ENCODE measurements at regions of chr11 and their contacts with region 1.

Region 1: DNA sequence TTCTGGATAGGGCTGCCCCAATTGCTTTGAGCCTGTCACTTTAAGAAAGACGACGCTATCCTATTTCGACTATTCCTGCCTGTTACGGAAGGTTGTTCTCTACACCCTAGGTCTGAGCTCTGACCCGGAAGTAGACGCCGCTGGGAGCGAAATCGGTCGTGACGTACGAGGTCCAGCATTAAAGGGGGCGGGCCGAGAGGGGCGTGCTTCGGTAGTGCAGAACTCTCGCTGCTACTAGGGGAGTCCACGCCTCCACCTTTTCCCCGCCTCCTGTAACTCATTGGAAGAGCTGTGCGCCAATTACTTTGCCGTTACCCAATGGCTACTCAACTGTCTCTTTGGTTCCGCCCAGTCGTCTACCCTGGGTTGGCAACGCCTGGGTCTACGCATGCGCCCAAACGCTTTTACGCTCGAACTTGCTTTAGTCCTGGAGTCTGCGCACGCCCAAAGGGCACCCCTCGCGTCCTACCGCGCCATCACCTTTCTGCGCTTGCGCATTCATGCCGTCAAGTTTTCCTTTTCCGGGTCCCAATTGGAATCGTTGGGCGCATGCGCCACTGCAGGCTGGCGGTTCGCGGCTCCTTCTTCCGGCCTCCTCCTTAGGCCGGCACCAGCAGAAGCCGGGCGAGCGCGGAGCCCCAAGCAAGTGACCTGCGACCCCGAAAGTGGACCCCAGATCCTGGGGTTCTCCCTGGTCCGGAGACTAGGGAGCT is at the start of gene PCNX3:
- DNase-seq: peak; percentile 100
- H3K4me3 Mint-ChIP-seq: peak within 1 kb of the TSS; percentile 97
- H3K27ac Mint-ChIP-seq: peak within 1 kb of the TSS; percentile 94
- H3K4me1 Mint-ChIP-seq: peaks cover 27% of the 10 kb centered on the region
- H3K27me3 Mint-ChIP-seq: no peaks in the 10 kb centered on the region
- total RNA-seq, gene PCNX3: 55.0 and 55.2 TPM in 2 replicates

Region 2: GRCh38 chr11:64723117-64723906 is 892.1 kb before region 1 on chr11 and contains the start of gene NRXN2:
- intact Hi-C with region 1: no loop called
- DNase-seq: peak; percentile 90
- H3K4me3 Mint-ChIP-seq: peak within 1 kb of the TSS; percentile 62
- H3K27ac Mint-ChIP-seq: peak within 1 kb of the TSS; percentile 52
- H3K4me1 Mint-ChIP-seq: peaks cover 13% of the 10 kb centered on the region
- H3K27me3 Mint-ChIP-seq: peaks cover 41% of the 10 kb centered on the region
- total RNA-seq, gene NRXN2: 0.17 and 0.23 TPM in 2 replicates

Region 3: DNA sequence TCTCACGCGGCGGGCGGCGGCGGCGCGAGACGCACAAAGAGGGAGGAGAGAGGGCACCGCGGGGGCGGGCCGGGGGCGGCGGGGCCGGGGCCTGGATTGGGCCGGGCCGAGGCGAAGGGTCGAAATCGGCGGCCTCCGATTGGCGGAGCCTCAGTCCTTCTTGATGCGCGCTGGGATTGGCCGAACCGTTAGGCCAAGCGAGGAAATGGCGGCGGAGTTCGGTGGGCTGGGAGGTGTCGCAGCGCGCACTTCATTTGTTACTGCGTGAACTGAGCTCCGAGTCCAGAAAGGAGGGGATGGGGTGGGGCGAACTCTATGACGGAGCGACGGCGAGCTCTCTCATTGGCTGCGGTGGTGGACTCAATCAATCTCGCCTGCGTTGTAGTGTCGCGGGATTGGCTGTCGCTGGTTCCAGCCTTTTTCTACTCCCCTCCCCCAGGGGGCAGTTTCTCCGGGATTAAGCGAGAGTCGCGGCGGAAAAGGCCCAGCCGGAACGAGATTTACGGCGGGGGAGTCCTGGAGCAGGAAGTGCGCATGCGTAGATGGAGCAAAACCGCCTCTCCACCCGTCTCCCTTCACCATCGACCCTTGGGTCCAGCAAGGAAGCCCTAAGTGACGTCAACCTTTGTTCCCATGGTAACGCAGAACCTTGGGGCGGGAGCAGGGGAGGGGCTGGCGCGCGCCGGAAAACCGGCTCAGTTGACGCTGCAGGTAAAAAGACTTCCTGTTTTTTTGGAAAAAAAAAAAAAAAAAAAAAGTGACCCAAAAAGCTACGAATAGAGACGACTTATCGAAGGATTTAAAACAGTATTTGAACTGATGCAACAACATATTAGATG is 836.7 kb before region 1 on chr11 and contains the start of gene SF1:
- intact Hi-C with region 1: loop called (anchors 2 kb)
- DNase-seq: peak; percentile 99
- H3K4me3 Mint-ChIP-seq: peak within 1 kb of the TSS; percentile 87
- H3K27ac Mint-ChIP-seq: peak within 1 kb of the TSS; percentile 97
- H3K4me1 Mint-ChIP-seq: peaks cover 57% of the 10 kb centered on the region
- H3K27me3 Mint-ChIP-seq: peaks cover 2% of the 10 kb centered on the region
- total RNA-seq, gene SF1: 518 and 538 TPM in 2 replicates

Region 4: GRCh38 chr11:65354265-65355012 is 260.9 kb before region 1 on chr11 and contains the start of gene TIGD3:
- intact Hi-C with region 1: loop called (anchors 1 kb)
- DNase-seq: peak; percentile 93
- H3K4me3 Mint-ChIP-seq: peak within 1 kb of the TSS; percentile 89
- H3K27ac Mint-ChIP-seq: peak within 1 kb of the TSS; percentile 81
- H3K4me1 Mint-ChIP-seq: peaks cover 8% of the 10 kb centered on the region
- H3K27me3 Mint-ChIP-seq: peaks cover 16% of the 10 kb centered on the region
- total RNA-seq, gene TIGD3: 1.1 TPM in 2 replicates

Region 5: DNA sequence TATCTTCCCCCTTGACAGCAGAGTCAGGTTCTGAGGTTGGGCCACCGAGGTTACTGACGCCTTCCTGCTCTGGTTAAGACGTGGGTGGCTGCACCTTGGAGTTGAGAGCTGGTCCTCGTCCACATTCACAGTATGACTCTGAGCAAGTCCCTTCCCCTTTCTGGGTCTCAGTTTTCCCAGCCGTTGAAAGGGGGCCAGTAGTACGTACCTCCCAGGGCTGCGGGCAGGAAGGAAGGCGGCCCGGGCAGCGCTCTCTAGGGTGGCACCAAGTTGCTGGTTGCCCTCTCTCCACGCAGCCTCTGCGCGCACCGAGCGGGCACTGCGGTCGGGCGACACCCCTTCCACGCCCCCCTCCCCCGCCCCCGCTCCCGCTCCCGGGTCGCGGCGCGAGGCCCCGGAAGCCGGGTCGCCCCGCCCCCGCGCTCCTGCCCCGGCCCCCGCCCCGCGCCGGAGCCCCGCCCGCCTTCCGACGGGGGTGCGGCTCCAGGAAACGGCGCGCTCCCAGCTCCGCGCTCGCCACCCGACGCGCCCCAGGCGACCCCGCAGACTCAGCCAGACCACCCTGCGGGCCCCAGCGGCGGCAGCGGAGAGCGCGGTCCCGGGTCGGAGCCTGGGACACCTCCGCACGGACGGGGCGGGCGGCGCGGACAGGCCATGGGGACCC is 39.7 kb before region 1 on chr11 and contains the start of gene EHBP1L1:
- intact Hi-C with region 1: loop called (anchors 1 kb)
- DNase-seq: peak; percentile 76
- H3K4me3 Mint-ChIP-seq: peak within 1 kb of the TSS; percentile 92
- H3K27ac Mint-ChIP-seq: peak within 1 kb of the TSS; percentile 88
- H3K4me1 Mint-ChIP-seq: peaks cover 48% of the 10 kb centered on the region
- H3K27me3 Mint-ChIP-seq: no peaks in the 10 kb centered on the region
- total RNA-seq, gene EHBP1L1: 168 and 178 TPM in 2 replicates

Region 6: DNA sequence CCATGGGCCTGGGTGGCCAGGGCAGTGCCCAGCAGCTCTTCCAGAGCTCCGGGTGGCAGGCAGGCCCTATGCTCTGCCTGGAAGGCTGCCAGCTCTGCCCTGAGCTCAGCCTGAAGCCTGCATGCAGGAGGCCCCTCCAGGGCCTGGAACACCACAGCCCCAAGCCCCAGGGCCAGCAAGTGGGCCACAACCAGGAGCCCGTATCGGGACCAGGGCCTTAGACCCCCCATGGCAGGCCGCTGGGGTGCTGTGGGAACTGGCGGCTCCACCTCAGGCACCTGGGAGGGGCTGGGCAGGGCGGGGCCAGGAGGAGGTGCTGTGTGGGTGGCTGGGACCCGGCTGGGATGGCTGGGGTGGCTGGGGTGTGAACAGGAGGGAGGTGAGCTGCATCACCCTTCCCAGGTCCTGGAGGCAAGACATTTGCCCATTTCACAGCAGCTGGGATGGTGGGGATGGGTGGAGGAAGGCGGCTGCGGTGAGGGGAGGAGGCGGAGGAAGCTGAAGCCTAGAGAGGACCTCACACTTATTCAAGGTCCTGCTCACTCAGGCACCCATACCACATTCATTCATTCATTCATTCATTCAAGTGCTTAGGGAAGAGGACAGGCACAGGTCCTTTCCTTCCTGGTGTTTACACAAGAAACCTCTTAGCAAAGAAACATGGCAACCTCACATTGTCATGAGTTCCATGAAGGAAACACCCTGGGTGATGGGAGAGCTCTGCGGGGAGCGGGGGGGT is 19.7 kb before region 1 on chr11 and contains the start of gene KCNK7:
- intact Hi-C with region 1: no loop called
- DNase-seq: no peak
- H3K4me3 Mint-ChIP-seq: peak within 1 kb of the TSS; percentile 35
- H3K27ac Mint-ChIP-seq: peak within 1 kb of the TSS; percentile 29
- H3K4me1 Mint-ChIP-seq: peaks cover 14% of the 10 kb centered on the region
- H3K27me3 Mint-ChIP-seq: no peaks in the 10 kb centered on the region
- total RNA-seq, gene KCNK7: 1.6 and 2.0 TPM in 2 replicates

Region 7: GRCh38 chr11:65652511-65653231 is 37.3 kb after region 1 on chr11:
- intact Hi-C with region 1: loop called (anchors 1 kb)
- DNase-seq: peak; percentile 95
- H3K4me3 Mint-ChIP-seq: peak overlapping the region; percentile 88
- H3K27ac Mint-ChIP-seq: peak overlapping the region; percentile 97
- H3K4me1 Mint-ChIP-seq: peaks cover 42% of the 10 kb centered on the region
- H3K27me3 Mint-ChIP-seq: peaks cover 3% of the 10 kb centered on the region

Region 8: GRCh38 chr11:65888163-65888814 is 272.9 kb after region 1 on chr11 and contains the start of gene FIBP:
- intact Hi-C with region 1: loop called (anchors 1 kb)
- DNase-seq: peak; percentile 90
- H3K4me3 Mint-ChIP-seq: peak within 1 kb of the TSS; percentile 99
- H3K27ac Mint-ChIP-seq: peak within 1 kb of the TSS; percentile 96
- H3K4me1 Mint-ChIP-seq: peaks cover 58% of the 10 kb centered on the region
- H3K27me3 Mint-ChIP-seq: no peaks in the 10 kb centered on the region
- total RNA-seq, gene FIBP: 86.8 and 93.2 TPM in 2 replicates

Region 9: DNA sequence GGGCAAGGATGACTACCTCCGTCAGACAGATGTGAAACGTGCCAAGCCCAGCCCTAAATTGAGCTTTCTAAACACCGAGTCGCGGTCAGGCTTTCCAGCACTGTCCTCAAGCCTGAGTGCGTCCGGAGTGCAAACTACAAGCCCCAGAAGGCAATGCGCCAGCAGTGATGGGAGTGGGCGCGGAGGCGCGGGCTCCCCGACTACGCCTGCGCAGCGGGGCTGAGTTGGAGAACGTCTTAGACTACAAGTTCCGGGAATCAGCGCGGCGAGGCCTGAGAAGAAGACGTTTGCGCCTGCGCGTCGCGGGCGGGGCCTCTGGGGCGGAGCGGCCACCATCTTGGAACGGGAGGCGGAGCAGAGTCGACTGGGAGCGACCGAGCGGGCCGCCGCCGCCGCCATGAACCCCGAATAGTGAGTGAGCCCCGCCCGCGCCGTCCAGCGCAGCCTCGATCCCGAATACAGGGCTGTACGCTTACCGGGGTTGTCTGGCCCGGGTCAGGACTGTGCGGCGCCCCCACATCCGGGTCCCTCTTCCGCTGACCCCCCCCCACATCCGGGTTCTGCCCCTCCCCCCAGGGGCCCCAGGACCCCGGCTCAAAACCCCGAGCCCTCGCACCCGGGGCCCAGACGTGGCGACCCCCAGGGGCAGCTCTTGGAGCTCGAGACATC is 653.0 kb after region 1 on chr11 and contains the start of gene RAB1B:
- intact Hi-C with region 1: loop called (anchors 1 kb)
- DNase-seq: peak; percentile 100
- H3K4me3 Mint-ChIP-seq: peak within 1 kb of the TSS; percentile 90
- H3K27ac Mint-ChIP-seq: peak within 1 kb of the TSS; percentile 90
- H3K4me1 Mint-ChIP-seq: peaks cover 35% of the 10 kb centered on the region
- H3K27me3 Mint-ChIP-seq: peaks cover 2% of the 10 kb centered on the region
- total RNA-seq, gene RAB1B: 123 and 124 TPM in 2 replicates

Measured in activated T-helper 1 cell treated with anti-CD3 and anti-CD28 coated beads, Interleukin-12 subunit alpha, Interleukin-12 subunit beta, Interleukin-2, Interleukin-4 antibody, amounts not matched to agents 30 ng/mL and 10 ng/mL and 1 ng/mL, durations not matched to agents 14 hours and 24 hours and 36 hours (primary cell).